ENCODE measurements at regions of chr1 and their contacts with region 1.

Region 1: DNA sequence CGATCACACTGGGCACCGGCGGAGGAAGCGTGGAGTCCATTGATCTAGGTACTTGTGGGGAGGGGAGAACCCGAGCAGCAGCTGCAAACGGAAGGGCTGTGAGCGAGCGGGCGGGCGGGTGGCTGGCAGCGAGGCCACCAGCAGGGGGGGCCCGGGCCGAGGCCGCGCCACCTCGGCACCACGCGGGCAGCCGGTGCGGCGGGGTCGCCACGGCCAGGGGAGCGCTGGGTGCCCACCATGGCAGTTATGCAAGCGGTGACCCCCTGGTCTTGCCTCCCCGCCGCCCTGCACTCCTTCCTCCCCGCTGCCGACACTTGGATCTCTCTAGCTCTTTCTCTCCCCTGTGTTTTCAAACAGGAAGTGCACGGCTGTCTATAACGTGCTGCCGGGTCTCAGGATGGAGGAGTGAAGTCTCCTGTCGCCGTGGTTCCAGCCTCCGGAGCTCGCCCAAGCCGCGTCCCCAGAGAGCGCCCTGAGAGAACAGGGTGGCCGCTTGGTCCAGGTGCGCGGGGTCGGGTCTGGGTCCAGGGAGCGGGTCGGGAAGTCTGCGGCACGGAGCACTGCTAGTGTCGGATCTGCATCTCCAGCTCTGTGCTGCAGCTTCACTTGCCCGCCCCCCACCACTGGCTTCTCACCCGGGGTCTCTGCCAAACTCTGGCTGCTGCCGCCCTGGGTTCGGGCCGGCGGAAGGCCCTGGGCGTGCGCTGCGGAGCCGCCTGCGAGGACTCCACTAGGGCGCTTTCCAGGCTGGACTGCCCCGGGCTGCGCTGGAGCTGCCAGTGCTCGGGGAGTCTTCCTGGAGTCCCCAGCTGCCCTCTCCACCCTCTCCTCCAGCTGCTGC is 22.7 kb downstream of the LRRC8D start:
- DNase-seq: peak; percentile 88
- ATAC-seq: peak; percentile 92
- H3K4me3 Mint-ChIP-seq: peak overlapping the region; percentile 94
- H3K27ac Mint-ChIP-seq: peak overlapping the region; percentile 91
- H3K4me1 Mint-ChIP-seq: peaks cover 63% of the 10 kb centered on the region
- H3K27me3 Mint-ChIP-seq: no peaks in the 10 kb centered on the region

Region 2: DNA sequence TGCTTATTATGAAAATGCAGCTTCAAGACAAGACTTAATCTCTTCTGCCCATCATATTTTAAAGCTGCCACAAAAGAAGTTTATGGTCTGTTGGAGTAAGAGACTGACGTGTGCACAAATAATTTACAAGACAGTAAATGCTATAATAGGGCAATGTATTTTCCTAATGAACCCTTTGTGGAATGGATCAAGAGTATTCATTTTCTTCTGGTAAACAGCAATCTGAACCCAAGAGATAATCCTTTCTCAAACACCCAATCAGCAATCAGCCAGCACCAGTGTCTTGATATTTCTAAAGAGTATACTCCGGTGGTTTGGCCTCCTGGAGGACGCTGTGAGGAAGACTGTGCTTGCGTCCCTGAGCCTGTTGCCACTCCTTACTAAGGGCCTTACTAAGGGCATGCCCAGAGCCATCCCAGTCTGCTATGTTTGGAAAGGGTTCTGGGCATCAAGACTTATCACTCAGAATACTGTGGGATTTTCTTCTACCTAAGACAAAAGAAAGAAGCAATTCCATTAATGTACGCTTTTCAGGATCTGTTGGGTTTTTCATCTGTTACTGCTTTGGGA is 71.4 kb before region 1 on chr1:
- CTCF ChIA-PET with region 1: no interaction called
- DNase-seq: no peak
- ATAC-seq: no peak
- H3K4me3 Mint-ChIP-seq: no peak overlapping the region
- H3K27ac Mint-ChIP-seq: no peak overlapping the region
- H3K4me1 Mint-ChIP-seq: peaks cover 9% of the 10 kb centered on the region
- H3K27me3 Mint-ChIP-seq: peaks cover 2% of the 10 kb centered on the region

Region 3: DNA sequence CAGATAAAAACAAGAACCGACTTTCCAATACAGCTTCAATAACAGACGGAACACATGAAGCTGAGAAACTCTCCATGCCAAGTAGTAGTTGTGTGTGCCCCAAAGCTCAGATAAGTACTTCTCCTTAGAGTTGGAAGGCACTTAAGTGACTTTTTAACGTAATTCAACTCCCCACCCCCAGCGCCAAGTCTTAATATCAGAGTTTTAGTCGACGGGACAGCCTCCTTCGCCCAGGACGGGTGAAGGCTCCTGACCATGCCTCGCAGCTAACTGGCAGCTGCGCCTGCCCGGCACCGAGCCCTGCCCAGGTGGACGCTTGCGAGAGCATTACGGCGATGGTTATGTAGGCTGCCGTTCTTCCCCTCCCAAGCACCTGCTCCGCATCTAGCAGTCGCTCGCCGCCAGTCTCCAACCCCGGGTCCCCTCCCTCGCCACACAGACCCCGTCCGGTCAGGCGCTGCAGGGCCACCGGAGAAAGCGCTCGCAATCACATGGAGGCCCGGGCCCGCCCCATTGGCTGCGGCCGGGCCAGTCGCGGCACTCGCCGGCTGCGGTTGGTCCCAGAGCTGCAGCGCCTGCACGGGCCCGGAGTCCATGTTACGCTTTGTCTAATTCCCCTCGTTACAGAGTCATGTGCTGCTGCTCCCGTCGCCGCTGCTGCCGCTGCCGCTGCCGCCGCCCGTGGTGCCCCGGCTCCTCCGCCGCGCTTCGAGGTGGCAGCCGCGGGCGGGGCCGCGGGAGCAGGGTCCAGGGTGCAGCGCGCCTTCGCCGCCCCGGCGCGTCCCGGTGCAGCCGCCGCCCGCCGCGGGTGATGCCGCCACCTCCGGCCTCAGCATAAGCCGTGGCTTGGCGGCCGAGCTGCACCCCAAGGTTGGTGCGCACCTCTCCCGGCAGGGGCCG is 22.8 kb before region 1 on chr1 and contains the start of gene LRRC8D:
- CTCF ChIA-PET with region 1: interaction called, 23 read pairs
- DNase-seq: peak; percentile 78
- ATAC-seq: peak; percentile 83
- H3K4me3 Mint-ChIP-seq: peak within 1 kb of the TSS; percentile 76
- H3K27ac Mint-ChIP-seq: peak within 1 kb of the TSS; percentile 55
- H3K4me1 Mint-ChIP-seq: peaks cover 23% of the 10 kb centered on the region
- H3K27me3 Mint-ChIP-seq: peaks cover 8% of the 10 kb centered on the region
- total RNA-seq, gene LRRC8D: 19.2 to 27.7 TPM

Region 4: DNA sequence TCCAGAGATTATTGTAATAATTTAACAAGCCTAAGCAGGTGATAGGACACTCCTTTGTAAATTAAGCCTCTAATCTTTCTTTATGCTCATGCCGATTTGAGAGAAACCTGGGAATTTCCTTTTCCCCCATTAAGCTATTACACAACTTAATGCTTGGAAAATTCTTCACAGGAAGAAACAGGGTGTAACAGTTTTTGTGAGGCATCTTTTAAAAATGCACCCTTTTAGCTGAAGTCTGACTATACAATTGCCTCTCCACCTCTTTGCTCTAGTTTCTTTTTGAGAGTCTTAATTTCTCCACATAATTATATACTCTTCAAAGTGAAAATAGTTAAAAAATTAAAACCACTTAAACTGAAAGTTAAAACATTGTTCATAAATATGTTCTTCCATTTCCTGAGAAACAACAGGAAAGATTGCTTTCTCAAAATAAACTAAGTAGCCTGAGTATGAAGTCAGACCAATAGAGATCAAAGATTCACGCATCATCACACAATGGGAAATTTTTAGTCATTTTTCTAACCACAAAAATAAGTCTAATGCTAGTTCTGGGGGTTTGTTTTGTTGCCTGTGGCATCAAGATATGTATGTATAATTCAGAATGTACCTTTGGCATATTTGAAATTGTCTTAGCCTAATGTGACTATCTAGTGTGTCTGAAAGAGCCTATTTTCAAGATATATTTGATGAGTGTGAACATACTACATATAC is 12.1 kb after region 1 on chr1:
- CTCF ChIA-PET with region 1: interaction called, 13 read pairs
- DNase-seq: no peak
- ATAC-seq: peak; percentile 85
- H3K4me3 Mint-ChIP-seq: peak overlapping the region; percentile 34
- H3K27ac Mint-ChIP-seq: no peak overlapping the region
- H3K4me1 Mint-ChIP-seq: peaks cover 2% of the 10 kb centered on the region
- H3K27me3 Mint-ChIP-seq: no peaks in the 10 kb centered on the region

Region 5: GRCh38 chr1:89987170-89987819 is 143.8 kb after region 1 on chr1:
- CTCF ChIA-PET with region 1: interaction called, 10 read pairs
- DNase-seq: peak; percentile 70
- ATAC-seq: peak; percentile 74
- H3K4me3 Mint-ChIP-seq: no peak overlapping the region
- H3K27ac Mint-ChIP-seq: no peak overlapping the region
- H3K4me1 Mint-ChIP-seq: peaks cover 1% of the 10 kb centered on the region
- H3K27me3 Mint-ChIP-seq: peaks cover 27% of the 10 kb centered on the region

Measured in activated CD8-positive, alpha-beta memory T cell treated with anti-CD3 and anti-CD28 coated beads, Interleukin-2, amount 10 ng/mL, durations not matched to agents 7 days and 5 days (primary cell).